CD4-positive, alpha-beta memory T cell (primary cell): ENCODE measurements at regions of chr2 and their contacts with region 1.

Region 1: GRCh38 chr2:181457121-181457740 is at the start of gene ITGA4:
- DNase-seq: peak; percentile 80 to 86 (median 83)
- H3K4me3 ChIP-seq: peak within 1 kb of the TSS; percentile 25 to 91
- H3K4me3 Mint-ChIP-seq: peak within 1 kb of the TSS; percentile 93 to 99 (median 96)
- H3K27ac ChIP-seq: peak within 1 kb of the TSS; percentile 86
- H3K27ac Mint-ChIP-seq: peak within 1 kb of the TSS; percentile 87 to 98 (median 96)
- H3K4me1 ChIP-seq: peaks cover 30% of the 10 kb centered on the region
- H3K4me1 Mint-ChIP-seq: peaks cover 30 to 73% (median 43%) of the 10 kb centered on the region in 4 donors
- H3K27me3 ChIP-seq: no peaks in the 10 kb centered on the region
- H3K27me3 Mint-ChIP-seq: no peaks in the 10 kb centered on the region
- total RNA-seq, gene ITGA4: 278 to 297 TPM

Region 2: DNA sequence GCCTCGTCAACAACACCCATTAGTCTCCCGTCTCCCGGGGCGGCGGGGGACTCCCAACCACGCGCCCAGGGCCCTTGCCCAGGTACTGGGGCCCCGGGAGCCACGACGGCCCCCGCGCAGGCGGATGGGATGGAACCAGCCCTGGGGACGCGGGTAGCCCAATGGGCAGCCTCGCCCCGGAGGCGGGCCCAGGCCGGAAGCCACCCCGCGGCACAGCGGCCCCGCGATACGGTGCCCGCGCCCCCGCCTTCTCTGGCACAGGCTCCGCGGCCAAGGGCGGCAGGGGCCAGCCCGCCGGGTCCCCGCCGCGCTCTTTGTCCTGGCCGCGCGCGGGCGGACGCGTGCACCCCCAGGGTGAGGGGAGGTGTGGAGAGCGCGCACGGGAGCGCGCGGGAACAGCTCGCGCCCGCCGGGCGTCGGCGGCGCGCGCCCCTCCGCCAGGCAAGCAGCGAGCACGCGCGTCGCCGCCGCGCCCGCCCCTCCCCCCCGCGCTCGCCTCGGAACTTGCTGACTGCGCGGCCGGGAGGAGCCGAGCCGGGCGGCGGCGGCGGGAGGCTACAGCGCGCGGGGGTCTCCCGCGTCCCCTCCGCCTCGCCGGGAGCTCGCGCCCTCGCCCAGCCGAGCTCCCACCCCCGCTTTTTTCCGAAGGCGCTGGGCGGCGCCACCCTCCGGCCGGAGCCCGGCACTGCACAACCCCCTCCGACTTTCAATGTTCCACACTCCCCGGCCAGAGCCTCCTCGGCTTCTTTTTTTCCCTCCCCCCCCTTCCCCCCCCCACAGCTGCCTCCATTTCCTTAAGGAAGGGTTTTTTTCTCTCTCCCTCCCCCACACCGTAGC is 476.9 kb before region 1 on chr2 and contains the start of gene UBE2E3:
- CTCF ChIA-PET with region 1: no interaction called
- POLR2A ChIA-PET with region 1: interaction called, 3 read pairs
- intact Hi-C with region 1: loop called (anchors 5 kb)
- DNase-seq: peak; percentile 77 to 83 (median 81)
- H3K4me3 ChIP-seq: peak within 1 kb of the TSS; percentile 59
- H3K4me3 Mint-ChIP-seq: peak within 1 kb of the TSS; percentile 94 to 99 (median 98)
- H3K27ac ChIP-seq: peak within 1 kb of the TSS; percentile 49
- H3K27ac Mint-ChIP-seq: peak within 1 kb of the TSS; percentile 89 to 98 (median 97)
- H3K4me1 ChIP-seq: peaks cover 35% of the 10 kb centered on the region
- H3K4me1 Mint-ChIP-seq: peaks cover 29 to 55% (median 44%) of the 10 kb centered on the region in 4 donors
- H3K27me3 ChIP-seq: no peaks in the 10 kb centered on the region
- H3K27me3 Mint-ChIP-seq: no peaks in the 10 kb centered on the region
- total RNA-seq, gene UBE2E3: 25.0 to 27.0 TPM

Region 3: GRCh38 chr2:181123798-181124231 is 333.4 kb before region 1 on chr2:
- CTCF ChIA-PET with region 1: interaction called, 15 read pairs
- POLR2A ChIA-PET with region 1: interaction called, 202 read pairs
- intact Hi-C with region 1: loop called (anchors 5 kb)
- DNase-seq: peak; percentile 78 to 89 (median 87)
- H3K4me3 ChIP-seq: peak overlapping the region in 1 of 2 donors; percentile 36
- H3K4me3 Mint-ChIP-seq: peak overlapping the region; percentile 76 to 90 (median 80)
- H3K27ac ChIP-seq: peak overlapping the region; percentile 78
- H3K27ac Mint-ChIP-seq: peak overlapping the region; percentile 96 to 99 (median 97)
- H3K4me1 ChIP-seq: peaks cover 83% of the 10 kb centered on the region
- H3K4me1 Mint-ChIP-seq: peaks cover 43 to 76% (median 50%) of the 10 kb centered on the region in 4 donors
- H3K27me3 ChIP-seq: no peaks in the 10 kb centered on the region
- H3K27me3 Mint-ChIP-seq: no peaks in the 10 kb centered on the region

Region 4: GRCh38 chr2:181178823-181179412 is 278.3 kb before region 1 on chr2:
- CTCF ChIA-PET with region 1: interaction called, 10 read pairs
- POLR2A ChIA-PET with region 1: interaction called, 27 read pairs
- intact Hi-C with region 1: loop called (anchors 1 kb)
- DNase-seq: peak in 4 of 5 donors; percentile 29 to 43 (median 37)
- H3K4me3 ChIP-seq: no peak overlapping the region
- H3K4me3 Mint-ChIP-seq: peak overlapping the region in 4 of 8 donors; percentile 19 to 41 (median 34)
- H3K27ac ChIP-seq: peak overlapping the region; percentile 1
- H3K27ac Mint-ChIP-seq: peak overlapping the region; percentile 12 to 90 (median 54)
- H3K4me1 ChIP-seq: peaks cover 52% of the 10 kb centered on the region
- H3K4me1 Mint-ChIP-seq: peaks cover 31 to 39% (median 36%) of the 10 kb centered on the region in 4 donors
- H3K27me3 ChIP-seq: no peaks in the 10 kb centered on the region
- H3K27me3 Mint-ChIP-seq: no peaks in the 10 kb centered on the region

Region 5: DNA sequence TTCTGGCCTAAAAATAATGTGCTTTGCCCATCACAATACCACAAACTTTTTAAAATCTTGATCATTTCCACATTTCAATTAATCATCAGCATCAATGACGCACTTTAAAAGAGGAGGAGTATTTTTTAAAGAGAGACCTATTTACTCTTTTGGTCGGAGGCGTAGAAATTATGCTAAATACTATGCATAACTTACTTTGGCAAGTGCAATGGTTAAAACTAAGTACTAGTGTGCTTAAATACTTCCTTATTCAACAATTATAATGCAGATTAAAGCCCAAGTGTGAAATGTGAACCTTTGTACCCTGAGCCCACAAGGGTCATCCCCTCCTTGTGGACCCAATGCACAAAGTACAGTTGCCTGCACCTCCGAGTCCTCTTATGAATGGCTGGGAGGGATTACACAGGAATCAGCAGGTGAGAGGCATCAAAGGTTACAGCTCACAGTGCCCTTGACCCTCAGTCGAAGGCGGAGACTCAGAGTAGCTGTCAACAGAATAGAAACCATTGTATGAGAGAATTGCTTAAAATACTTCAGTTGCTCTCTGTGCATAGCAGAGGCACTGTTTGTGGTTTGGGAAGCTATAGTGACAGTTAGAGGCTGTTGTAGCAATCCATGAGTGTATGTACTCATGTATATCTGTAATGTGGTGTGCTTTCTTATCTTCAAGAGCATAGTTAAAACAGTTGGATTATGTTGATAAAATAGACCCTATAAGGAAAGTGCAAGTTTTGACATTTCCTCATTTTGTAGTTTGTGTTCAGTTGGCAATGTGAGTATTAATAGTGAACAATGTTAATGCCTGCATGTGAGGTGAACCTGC is 151.7 kb before region 1 on chr2:
- CTCF ChIA-PET with region 1: interaction called, 46 read pairs
- POLR2A ChIA-PET with region 1: interaction called, 374 read pairs
- intact Hi-C with region 1: loop called (anchors 1 kb)
- DNase-seq: peak in 4 of 5 donors; percentile 38 to 71 (median 44)
- H3K4me3 ChIP-seq: peak overlapping the region in 1 of 2 donors; percentile 16
- H3K4me3 Mint-ChIP-seq: peak overlapping the region; percentile 64 to 81 (median 72)
- H3K27ac ChIP-seq: peak overlapping the region; percentile 73
- H3K27ac Mint-ChIP-seq: peak overlapping the region; percentile 88 to 97 (median 92)
- H3K4me1 ChIP-seq: peaks cover 91% of the 10 kb centered on the region
- H3K4me1 Mint-ChIP-seq: peaks cover 53 to 80% (median 65%) of the 10 kb centered on the region in 4 donors
- H3K27me3 ChIP-seq: no peaks in the 10 kb centered on the region
- H3K27me3 Mint-ChIP-seq: no peaks in the 10 kb centered on the region

Region 6: GRCh38 chr2:181371782-181372645 is 85.2 kb before region 1 on chr2:
- CTCF ChIA-PET with region 1: no interaction called
- POLR2A ChIA-PET with region 1: interaction called, 12 read pairs
- intact Hi-C with region 1: no loop called
- DNase-seq: peak in 1 of 5 donors; percentile 13
- H3K4me3 ChIP-seq: no peak overlapping the region
- H3K4me3 Mint-ChIP-seq: peak overlapping the region in 7 of 8 donors; percentile 18 to 70 (median 33)
- H3K27ac ChIP-seq: no peak overlapping the region
- H3K27ac Mint-ChIP-seq: peak overlapping the region; percentile 40 to 90 (median 83)
- H3K4me1 ChIP-seq: peaks cover 28% of the 10 kb centered on the region
- H3K4me1 Mint-ChIP-seq: peaks cover 17 to 43% (median 30%) of the 10 kb centered on the region in 4 donors
- H3K27me3 ChIP-seq: no peaks in the 10 kb centered on the region
- H3K27me3 Mint-ChIP-seq: no peaks in the 10 kb centered on the region

Region 7: DNA sequence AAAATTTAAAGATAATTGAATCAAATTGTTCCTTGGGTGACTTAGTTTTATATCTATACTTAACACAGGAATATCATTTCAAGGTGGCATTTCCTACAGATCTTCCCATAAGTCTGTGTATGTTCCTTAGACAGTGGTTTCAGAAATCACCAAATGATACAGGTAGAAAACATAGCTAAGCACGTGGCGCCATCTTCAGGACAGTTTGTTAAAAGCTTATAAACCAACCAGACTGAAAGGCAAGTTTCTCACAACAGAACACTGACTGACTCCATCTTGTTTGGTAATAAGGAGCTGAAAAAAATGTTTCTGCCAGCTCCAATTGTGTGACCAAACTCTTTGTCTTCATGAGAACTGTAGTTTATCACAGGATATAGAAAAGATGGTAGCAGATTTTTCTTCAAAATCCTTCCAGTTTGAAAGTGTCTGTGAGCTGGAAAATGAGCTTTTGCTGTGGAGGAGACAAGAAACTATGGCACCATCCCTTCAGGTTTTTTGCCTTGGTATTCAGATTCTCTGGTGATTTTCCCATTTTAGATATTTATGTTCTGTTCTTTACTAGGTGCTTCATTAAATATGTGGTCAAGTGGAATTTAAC is 257.9 kb after region 1 on chr2:
- CTCF ChIA-PET with region 1: interaction called, 10 read pairs
- POLR2A ChIA-PET with region 1: no interaction called
- intact Hi-C with region 1: no loop called
- DNase-seq: peak; percentile 51 to 68 (median 58)
- H3K4me3 ChIP-seq: no peak overlapping the region
- H3K4me3 Mint-ChIP-seq: no peak overlapping the region
- H3K27ac ChIP-seq: no peak overlapping the region
- H3K27ac Mint-ChIP-seq: no peak overlapping the region
- H3K4me1 ChIP-seq: no peaks in the 10 kb centered on the region
- H3K4me1 Mint-ChIP-seq: no peaks in the 10 kb centered on the region
- H3K27me3 ChIP-seq: no peaks in the 10 kb centered on the region
- H3K27me3 Mint-ChIP-seq: peaks cover 0 to 3% of the 10 kb centered on the region in 2 donors